ENCODE measurements at regions of chr7 and their contacts with region 1.

Region 1: GRCh38 chr7:73701357-73701995 is 18.0 kb downstream of the STX1A start:
- DNase-seq: peak; percentile 59
- ATAC-seq: no peak
- H3K4me3 Mint-ChIP-seq: no peak overlapping the region
- H3K27ac Mint-ChIP-seq: no peak overlapping the region
- H3K4me1 Mint-ChIP-seq: peaks cover 9% of the 10 kb centered on the region
- H3K27me3 Mint-ChIP-seq: no peaks in the 10 kb centered on the region

Region 2: DNA sequence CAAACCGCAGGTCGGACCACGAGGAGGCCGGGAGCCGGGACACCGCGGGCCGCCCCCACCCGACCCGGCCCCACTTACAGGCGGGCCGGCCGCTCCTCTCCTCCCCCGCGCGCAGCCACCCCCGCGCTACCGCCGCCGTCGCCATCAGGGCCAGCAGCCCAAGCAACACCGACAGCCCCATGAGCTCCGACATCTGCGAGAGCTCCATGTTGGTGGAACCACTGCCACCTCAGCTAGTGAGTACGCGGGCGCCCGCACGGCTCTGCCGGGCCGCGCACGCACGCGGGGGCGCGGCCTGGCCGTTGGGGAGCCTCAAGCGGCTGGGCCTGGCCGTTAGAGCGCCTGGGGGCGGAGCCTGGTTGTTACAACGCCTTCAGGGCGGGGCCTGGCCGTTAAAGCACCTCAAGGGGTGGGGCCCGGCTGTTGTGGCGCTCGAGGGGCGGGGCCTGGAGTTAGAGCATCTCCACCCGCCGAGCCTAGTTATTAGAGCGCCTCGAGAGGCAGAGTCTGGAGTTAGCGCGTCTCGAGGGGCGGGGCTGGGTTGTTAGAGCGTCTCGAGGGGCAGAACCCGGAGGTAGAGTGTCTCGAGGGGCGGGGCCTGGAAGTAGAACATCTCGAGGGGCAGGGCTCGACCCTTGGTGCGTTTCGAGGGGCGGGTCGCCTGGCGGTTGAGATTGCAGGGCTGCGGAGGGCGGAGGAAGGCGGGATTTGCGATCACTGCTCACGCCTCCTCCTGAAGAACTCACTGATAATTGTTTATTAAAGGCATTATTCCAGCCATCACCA is 122.9 kb before region 1 on chr7 and contains the start of gene TBL2:
- CTCF ChIA-PET with region 1: no interaction called
- POLR2A ChIA-PET with region 1: no interaction called
- intact Hi-C with region 1: no loop called
- DNase-seq: peak; percentile 100
- ATAC-seq: peak; percentile 92
- H3K4me3 Mint-ChIP-seq: peak within 1 kb of the TSS; percentile 98
- H3K27ac Mint-ChIP-seq: peak within 1 kb of the TSS; percentile 98
- H3K4me1 Mint-ChIP-seq: peaks cover 26% of the 10 kb centered on the region
- H3K27me3 Mint-ChIP-seq: no peaks in the 10 kb centered on the region
- total RNA-seq, gene TBL2: 30.6 to 34.7 TPM

Region 3: DNA sequence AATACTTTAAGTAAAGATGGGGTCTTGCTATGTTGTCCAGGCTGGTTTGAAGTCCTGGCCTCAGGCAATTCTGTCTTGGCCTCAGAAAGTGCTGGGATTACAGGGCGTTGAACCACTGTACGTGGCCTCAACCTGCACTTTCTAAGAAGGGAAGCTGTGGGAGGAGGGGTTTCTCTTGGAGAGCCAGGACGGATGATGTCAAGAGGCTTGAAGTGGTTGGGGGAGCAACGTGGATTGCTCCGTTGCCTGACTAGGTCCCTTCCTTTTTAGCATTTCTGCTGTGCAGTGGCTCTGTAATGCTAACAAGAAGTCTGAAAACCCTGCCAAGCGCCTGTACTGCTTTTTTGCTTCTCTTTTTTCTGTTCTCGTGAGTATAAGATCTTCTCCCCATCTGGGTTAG is 10.8 kb before region 1 on chr7:
- CTCF ChIA-PET with region 1: interaction called, 17 read pairs
- POLR2A ChIA-PET with region 1: interaction called, 6 read pairs
- intact Hi-C with region 1: no loop called
- DNase-seq: no peak
- ATAC-seq: no peak
- H3K4me3 Mint-ChIP-seq: no peak overlapping the region
- H3K27ac Mint-ChIP-seq: no peak overlapping the region
- H3K4me1 Mint-ChIP-seq: peaks cover 15% of the 10 kb centered on the region
- H3K27me3 Mint-ChIP-seq: no peaks in the 10 kb centered on the region

Region 4: GRCh38 chr7:73712773-73713172 is 11.3 kb after region 1 on chr7:
- CTCF ChIA-PET with region 1: interaction called, 21 read pairs
- POLR2A ChIA-PET with region 1: interaction called, 17 read pairs
- intact Hi-C with region 1: loop called in 1 of 2 experiments (anchors 1 kb)
- DNase-seq: no peak
- ATAC-seq: no peak
- H3K4me3 Mint-ChIP-seq: no peak overlapping the region
- H3K27ac Mint-ChIP-seq: no peak overlapping the region
- H3K4me1 Mint-ChIP-seq: peaks cover 29% of the 10 kb centered on the region
- H3K27me3 Mint-ChIP-seq: no peaks in the 10 kb centered on the region

Region 5: DNA sequence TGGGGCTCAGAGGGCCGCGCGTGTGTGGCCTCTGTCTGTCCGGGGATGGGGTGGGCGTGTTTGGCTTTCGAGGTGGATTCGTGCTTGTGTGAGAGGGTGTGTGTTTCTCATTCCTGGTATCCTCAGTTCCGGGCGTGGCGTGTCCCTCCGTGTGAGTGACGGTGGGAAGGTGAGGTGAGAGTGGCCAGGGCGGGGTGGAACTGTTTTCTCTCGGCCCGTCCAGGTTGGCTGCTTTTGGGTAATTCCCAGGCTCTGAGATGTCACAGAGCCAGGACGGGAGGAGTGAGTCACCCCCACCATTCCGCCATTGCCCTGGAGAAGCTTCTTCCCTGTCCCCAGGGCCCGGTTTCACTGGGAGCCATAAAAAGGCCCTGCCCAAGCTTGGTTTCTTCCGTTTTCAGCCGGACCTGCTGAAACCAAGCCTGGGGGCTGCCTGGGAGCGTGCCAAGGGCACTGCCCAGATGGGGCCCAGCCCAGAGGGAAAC is 108.0 kb after region 1 on chr7:
- CTCF ChIA-PET with region 1: no interaction called
- POLR2A ChIA-PET with region 1: no interaction called
- intact Hi-C with region 1: no loop called
- DNase-seq: no peak
- ATAC-seq: no peak
- H3K4me3 Mint-ChIP-seq: no peak overlapping the region
- H3K27ac Mint-ChIP-seq: no peak overlapping the region
- H3K4me1 Mint-ChIP-seq: no peaks in the 10 kb centered on the region
- H3K27me3 Mint-ChIP-seq: peaks cover 5% of the 10 kb centered on the region